K562 (cell line): ENCODE measurements at regions of chr1 and their contacts with region 1.

Region 1: DNA sequence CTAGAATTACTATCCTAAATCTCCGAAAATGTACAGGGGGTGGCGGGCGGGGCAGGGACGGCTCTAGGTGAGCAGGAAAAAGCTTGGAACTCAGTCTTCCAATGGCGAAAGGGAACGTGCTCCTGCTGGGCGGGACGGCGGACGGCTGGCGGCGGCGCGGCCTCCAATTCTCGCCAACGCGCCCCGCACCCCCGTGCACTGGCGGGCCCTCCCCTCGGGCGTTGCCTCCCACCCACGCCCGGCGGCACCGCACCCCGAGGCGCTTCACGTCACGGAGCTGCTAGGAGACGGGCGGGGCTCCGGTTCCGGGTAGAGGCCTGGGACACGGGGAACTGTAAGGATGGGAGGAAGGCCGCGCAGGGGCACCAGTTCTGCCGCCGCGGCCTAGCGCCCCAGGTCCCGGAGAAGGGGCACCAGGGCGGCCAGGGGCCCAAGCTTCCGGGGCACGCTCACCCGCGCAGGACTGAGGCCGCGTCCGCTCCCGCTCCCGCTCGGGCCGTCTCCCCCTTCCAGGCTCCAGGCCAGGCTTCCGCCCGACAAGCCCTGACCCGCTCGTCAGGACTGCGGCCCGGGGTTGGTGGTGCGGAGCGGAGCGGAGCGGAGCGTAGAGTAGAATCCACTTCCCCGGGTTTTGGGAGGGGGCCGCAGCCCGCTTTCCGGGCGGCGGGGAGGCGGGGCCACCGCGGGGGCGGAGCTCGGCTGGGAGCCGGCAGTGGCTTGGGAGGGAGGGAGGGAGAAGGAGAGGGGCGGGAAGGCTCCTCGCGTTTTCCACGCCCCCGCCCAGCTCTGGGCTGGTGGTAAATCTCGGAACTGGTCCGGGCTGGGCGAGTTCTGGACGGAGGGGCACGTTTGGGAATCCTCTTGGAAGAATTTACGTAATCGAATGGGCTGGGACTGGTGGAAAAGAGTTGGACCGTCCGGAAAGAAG is at the start of gene DDX59:
- DNase-seq: peak; percentile 97 to 98 (median 98)
- ATAC-seq: peak; percentile 93
- H3K4me3 ChIP-seq: peak within 1 kb of the TSS; percentile 83
- H3K27ac ChIP-seq: peak within 1 kb of the TSS; percentile 98
- H3K4me1 ChIP-seq: peaks cover 12 to 13% of the 10 kb centered on the region in 2 experiments; a peak in 4 of 5 replicates
- H3K27me3 ChIP-seq: no peaks in the 10 kb centered on the region
- CTCF ChIP-seq: no peak
- EP300 ChIP-seq: peak; percentile 59
- POLR2A ChIP-seq: peak; percentile 98
- RAD21 ChIP-seq: peak in 1 of 2 experiments; percentile 5; a peak in 1 of 4 replicates
- polyA plus RNA-seq, gene DDX59: 8.3 TPM

Region 2: DNA sequence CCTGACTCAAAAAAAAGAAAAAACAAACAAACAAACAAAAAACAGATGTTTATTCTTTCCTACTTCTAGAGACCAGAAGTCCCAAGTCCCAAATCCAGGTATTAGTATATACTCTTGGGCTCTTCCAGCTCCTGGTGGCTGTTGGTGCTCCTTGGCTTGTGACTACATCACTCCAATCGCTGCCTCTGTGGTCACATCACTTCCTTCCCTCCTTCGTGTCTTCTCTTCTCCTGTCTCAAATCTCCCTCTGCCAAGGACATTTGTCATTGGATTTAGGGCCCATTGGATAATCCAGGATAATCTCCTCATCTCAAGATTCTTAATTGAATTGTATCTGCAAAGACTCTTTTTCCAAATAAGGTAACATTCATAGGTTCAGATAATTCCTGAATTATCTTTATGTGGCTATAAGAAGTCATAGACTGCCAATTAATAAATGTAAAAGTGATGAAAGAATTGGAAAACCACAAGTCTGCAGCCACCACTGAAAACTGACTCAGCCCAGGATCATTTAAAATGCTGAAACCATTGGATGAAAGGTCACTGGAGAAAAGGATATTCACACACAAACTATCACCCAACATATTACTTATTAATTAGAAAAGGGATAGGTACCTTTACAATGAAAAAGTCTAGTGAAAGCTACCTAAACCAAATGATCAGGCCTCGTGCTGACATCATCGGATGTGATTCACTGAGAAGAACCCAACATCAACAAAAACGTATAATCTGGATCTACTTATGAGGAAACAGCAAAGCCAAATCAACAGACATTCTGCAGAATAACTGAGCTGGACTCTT is 326.9 kb before region 1 on chr1:
- CTCF ChIA-PET with region 1: no interaction called
- POLR2A ChIA-PET with region 1: no interaction called
- in situ Hi-C with region 1: no loop called
- intact Hi-C with region 1: no loop called
- DNase-seq: no peak
- ATAC-seq: no peak
- H3K4me3 ChIP-seq: no peak overlapping the region
- H3K27ac ChIP-seq: no peak overlapping the region
- H3K4me1 ChIP-seq: no peaks in the 10 kb centered on the region
- H3K27me3 ChIP-seq: peaks cover 9 to 25% of the 10 kb centered on the region in 2 experiments
- CTCF ChIP-seq: no peak
- EP300 ChIP-seq: no peak
- POLR2A ChIP-seq: no peak
- RAD21 ChIP-seq: no peak

Region 3: GRCh38 chr1:200526709-200527612 is 142.6 kb before region 1 on chr1:
- CTCF ChIA-PET with region 1: no interaction called
- POLR2A ChIA-PET with region 1: no interaction called
- in situ Hi-C with region 1: no loop called
- intact Hi-C with region 1: no loop called
- DNase-seq: no peak
- ATAC-seq: no peak
- H3K4me3 ChIP-seq: no peak overlapping the region
- H3K27ac ChIP-seq: no peak overlapping the region
- H3K4me1 ChIP-seq: no peaks in the 10 kb centered on the region
- H3K27me3 ChIP-seq: peaks cover 28 to 63% of the 10 kb centered on the region in 2 experiments
- CTCF ChIP-seq: no peak
- EP300 ChIP-seq: no peak
- POLR2A ChIP-seq: no peak
- RAD21 ChIP-seq: no peak

Region 4: GRCh38 chr1:200620273-200621131 is 49.1 kb before region 1 on chr1 and contains the start of gene KIF14:
- CTCF ChIA-PET with region 1: interaction called, 6 read pairs
- POLR2A ChIA-PET with region 1: interaction called, 23 read pairs
- in situ Hi-C with region 1: no loop called
- intact Hi-C with region 1: loop called (anchors 1 kb)
- DNase-seq: peak; percentile 99
- ATAC-seq: peak; percentile 99
- H3K4me3 ChIP-seq: peak within 1 kb of the TSS; percentile 75
- H3K27ac ChIP-seq: peak within 1 kb of the TSS; percentile 88
- H3K4me1 ChIP-seq: peaks cover 3 to 15% of the 10 kb centered on the region in 2 experiments; a peak in 4 of 5 replicates
- H3K27me3 ChIP-seq: no peaks in the 10 kb centered on the region
- CTCF ChIP-seq: no peak
- EP300 ChIP-seq: no peak; the same call in 1 of the 2 replicates
- POLR2A ChIP-seq: peak; percentile 94
- RAD21 ChIP-seq: no peak
- polyA plus RNA-seq, gene KIF14: 11.5 to 14.0 TPM

Region 5: DNA sequence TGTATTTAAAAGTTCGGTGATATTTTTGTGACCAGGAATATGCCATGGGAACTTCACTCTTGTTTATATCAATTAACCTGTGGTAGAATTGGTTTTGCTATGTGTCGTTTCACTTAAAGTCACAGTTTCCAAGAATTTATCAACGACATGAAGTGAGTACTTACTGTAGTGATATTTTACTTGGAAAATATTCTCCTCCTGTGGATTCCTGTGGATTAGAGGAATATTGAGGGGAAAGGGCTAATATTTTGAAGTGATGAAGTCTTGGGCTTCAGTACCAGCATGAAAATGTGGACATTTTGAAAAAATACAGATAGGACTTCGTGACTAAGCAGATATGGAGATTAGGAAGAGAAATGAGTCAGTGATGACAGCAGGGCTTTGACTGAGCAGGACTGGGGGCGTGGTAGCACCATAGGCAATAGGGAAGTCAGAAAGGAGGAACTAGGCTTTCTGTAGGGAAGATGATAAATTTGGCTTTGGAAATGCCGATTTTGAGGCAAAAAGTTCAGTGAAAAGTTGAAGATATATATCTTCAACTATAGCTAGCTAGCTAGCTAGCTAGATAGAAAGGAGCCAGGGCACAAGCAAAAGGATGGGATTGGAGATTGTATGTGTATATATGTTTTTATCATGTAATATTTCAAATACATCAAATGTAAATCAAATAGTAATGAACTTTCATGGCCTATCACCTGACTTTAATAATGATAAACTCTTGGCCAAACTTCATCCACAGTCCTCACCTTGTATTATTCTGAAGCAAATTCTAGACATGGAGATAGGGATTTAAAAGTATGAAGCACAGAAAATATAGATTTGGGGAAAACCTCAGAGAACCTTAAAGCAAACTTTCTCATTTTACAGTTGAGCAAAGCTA is 29.5 kb before region 1 on chr1:
- CTCF ChIA-PET with region 1: no interaction called
- POLR2A ChIA-PET with region 1: interaction called, 17 read pairs
- in situ Hi-C with region 1: no loop called
- intact Hi-C with region 1: loop called (anchors 1 kb)
- DNase-seq: peak; percentile 89 to 97 (median 90)
- ATAC-seq: peak; percentile 95
- H3K4me3 ChIP-seq: no peak overlapping the region
- H3K27ac ChIP-seq: peak overlapping the region; percentile 92
- H3K4me1 ChIP-seq: peaks cover 25 to 40% of the 10 kb centered on the region in 2 experiments
- H3K27me3 ChIP-seq: no peaks in the 10 kb centered on the region
- CTCF ChIP-seq: no peak
- EP300 ChIP-seq: peak; percentile 94
- POLR2A ChIP-seq: peak; percentile 57
- RAD21 ChIP-seq: 0 out of 4 replicates have a peak, but pooled peaks of 1 of the 2 experiments have one; percentile 14

Region 6: GRCh38 chr1:200684015-200684414 is 14.4 kb after region 1 on chr1:
- CTCF ChIA-PET with region 1: no interaction called
- POLR2A ChIA-PET with region 1: interaction called, 21 read pairs
- in situ Hi-C with region 1: no loop called
- intact Hi-C with region 1: no loop called
- DNase-seq: no peak
- ATAC-seq: no peak
- H3K4me3 ChIP-seq: no peak overlapping the region
- H3K27ac ChIP-seq: no peak overlapping the region
- H3K4me1 ChIP-seq: no peaks in the 10 kb centered on the region; a peak in 1 of 5 replicates
- H3K27me3 ChIP-seq: no peaks in the 10 kb centered on the region
- CTCF ChIP-seq: no peak
- EP300 ChIP-seq: no peak
- POLR2A ChIP-seq: no peak
- RAD21 ChIP-seq: no peak

Region 7: DNA sequence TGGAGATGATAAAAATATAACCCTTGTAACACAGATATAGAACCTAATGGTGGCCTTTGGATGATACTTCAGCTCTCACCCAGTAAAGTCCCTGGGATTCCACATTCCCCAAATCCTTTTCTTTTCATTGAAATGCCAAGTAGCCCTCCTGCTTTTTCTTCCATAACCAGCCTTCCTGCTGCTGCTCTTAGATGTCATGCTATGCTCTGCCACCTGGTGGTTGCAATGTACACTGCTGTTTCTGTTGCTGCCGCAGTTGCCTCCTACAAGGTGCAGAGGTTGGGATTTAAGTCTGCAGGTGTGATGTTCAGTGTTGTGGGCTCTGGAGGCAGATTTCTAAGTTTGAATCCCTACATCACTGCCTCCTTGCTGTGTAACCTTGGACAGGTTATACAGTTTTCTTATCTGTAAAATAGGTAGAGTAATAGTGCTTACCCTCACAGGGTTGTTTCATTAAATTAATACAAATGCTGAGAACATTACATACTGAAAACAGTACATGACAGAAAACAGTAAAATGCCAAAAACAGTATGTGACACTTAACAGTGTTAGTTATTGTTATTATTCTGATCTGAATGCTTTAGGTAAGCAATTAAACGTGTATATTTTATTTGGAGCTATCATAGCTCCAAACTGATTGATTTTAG is 133.4 kb after region 1 on chr1:
- CTCF ChIA-PET with region 1: no interaction called
- POLR2A ChIA-PET with region 1: interaction called, 3 read pairs
- in situ Hi-C with region 1: no loop called
- intact Hi-C with region 1: loop called (anchors 1 kb)
- DNase-seq: peak; percentile 71 to 88 (median 74)
- ATAC-seq: peak; percentile 99
- H3K4me3 ChIP-seq: no peak overlapping the region
- H3K27ac ChIP-seq: no peak overlapping the region
- H3K4me1 ChIP-seq: no peaks in the 10 kb centered on the region
- H3K27me3 ChIP-seq: no peaks in the 10 kb centered on the region
- CTCF ChIP-seq: peak; percentile 94 to 96 (median 95)
- EP300 ChIP-seq: no peak
- POLR2A ChIP-seq: no peak
- RAD21 ChIP-seq: peak; percentile 98 to 99